MCF 10A (cell line): ENCODE measurements at regions of chr18 and their contacts with region 1.

Region 1: GRCh38 chr18:24726727-24727492 is 266.5 kb downstream of the HRH4 start:
- DNase-seq: peak; percentile 76
- H3K4me3 Mint-ChIP-seq: no peak overlapping the region
- H3K27ac Mint-ChIP-seq: no peak overlapping the region
- H3K4me1 Mint-ChIP-seq: no peaks in the 10 kb centered on the region
- H3K27me3 Mint-ChIP-seq: peaks cover 46% of the 10 kb centered on the region
- CTCF ChIP-seq: peak; percentile 75

Region 2: DNA sequence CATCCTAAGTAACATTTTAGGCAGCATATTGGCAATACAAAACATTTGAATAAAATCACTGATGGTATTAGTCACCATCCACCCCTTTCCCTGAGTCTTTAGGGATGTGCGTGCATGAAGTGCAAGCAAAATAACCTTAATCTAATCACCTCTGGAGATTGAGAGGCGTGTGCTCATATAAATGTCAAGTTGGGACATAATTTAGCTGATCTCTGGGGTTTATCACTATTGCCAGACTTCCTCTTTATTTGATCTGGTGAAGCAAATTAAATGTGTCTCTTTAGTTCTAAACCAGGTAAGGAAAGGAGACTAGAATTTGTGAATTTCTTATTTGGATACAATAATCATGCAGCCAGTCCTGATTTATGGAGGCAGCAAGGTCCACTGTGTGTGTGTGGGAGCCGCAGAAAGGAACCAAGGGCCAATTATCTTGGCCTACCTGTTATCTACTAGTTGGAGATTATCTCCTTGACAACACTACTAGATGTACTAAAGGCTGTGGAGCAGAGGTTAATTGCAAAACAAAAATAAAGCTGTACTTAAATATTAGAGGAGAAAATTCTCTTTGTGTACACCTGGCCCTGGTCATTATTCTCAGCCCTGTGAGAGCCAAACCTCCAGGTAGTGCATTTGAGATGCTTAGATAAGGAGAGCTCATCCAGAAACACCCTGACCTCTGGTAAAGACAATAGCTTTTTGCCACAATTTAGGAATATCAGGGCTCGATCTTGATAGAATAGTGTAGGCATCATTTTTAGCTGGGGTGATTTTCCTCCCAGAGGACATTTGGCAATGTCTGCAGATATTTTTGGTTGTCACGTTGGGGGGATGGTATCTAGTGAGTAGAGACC is 188.3 kb before region 1 on chr18:
- CTCF ChIA-PET with region 1: interaction called, 215 read pairs
- POLR2A ChIA-PET with region 1: no interaction called
- intact Hi-C with region 1: no loop called
- DNase-seq: no peak
- H3K4me3 Mint-ChIP-seq: no peak overlapping the region
- H3K27ac Mint-ChIP-seq: no peak overlapping the region
- H3K4me1 Mint-ChIP-seq: peaks cover 5% of the 10 kb centered on the region
- H3K27me3 Mint-ChIP-seq: peaks cover 33% of the 10 kb centered on the region
- CTCF ChIP-seq: no peak

Region 3: DNA sequence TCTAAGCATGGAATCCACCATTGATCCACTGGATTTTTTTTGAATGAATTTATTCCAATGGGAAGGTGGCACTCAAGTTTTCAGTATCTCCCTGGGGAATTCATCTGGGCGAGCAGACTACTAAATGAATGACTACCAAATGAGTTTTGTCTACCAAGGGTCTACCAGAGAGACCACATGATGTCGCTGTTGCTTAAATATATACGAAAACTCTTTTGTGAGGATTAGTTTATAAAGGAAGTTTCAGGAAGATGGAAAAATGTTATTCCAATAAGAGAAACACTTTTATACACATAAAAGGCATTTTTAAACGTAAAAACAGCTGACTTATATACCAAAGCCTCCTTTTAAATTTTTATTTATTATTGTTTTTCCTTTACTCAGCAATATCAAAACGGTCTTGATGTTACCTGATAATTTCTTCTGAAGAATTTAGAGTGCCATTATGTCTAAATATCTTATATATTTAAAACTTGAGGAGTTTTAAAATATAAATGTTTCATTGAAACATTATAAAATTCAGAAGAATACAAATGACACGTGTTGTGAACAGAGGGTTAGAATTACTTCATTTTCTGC is 126.7 kb before region 1 on chr18:
- CTCF ChIA-PET with region 1: interaction called, 120 read pairs
- POLR2A ChIA-PET with region 1: interaction called, 4 read pairs
- intact Hi-C with region 1: loop called (anchors 1 kb)
- DNase-seq: peak; percentile 65
- H3K4me3 Mint-ChIP-seq: no peak overlapping the region
- H3K27ac Mint-ChIP-seq: no peak overlapping the region
- H3K4me1 Mint-ChIP-seq: no peaks in the 10 kb centered on the region
- H3K27me3 Mint-ChIP-seq: peaks cover 37% of the 10 kb centered on the region
- CTCF ChIP-seq: peak; percentile 58

Region 4: DNA sequence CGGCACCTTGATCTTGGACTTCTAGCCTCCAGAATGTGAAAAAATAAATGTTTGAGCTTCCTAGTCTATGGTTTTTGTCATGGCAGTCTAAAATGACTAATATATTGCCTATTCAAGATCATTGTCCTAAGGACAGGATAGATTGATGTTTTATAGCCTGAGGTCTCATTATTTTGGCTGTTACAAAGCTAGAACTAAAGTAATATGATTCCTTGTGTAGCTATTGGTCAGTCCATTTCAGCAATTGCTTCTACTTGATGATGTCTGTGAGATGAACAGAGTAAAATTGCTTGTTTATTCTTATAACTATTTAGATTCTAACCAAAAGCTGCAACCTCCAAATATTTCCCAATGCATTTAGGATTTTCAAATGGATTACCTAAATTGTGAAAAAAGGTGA is 121.5 kb before region 1 on chr18:
- CTCF ChIA-PET with region 1: interaction called, 120 read pairs
- POLR2A ChIA-PET with region 1: interaction called, 3 read pairs
- intact Hi-C with region 1: loop called (anchors 1 kb)
- DNase-seq: no peak
- H3K4me3 Mint-ChIP-seq: no peak overlapping the region
- H3K27ac Mint-ChIP-seq: no peak overlapping the region
- H3K4me1 Mint-ChIP-seq: no peaks in the 10 kb centered on the region
- H3K27me3 Mint-ChIP-seq: no peaks in the 10 kb centered on the region
- CTCF ChIP-seq: no peak

Region 5: DNA sequence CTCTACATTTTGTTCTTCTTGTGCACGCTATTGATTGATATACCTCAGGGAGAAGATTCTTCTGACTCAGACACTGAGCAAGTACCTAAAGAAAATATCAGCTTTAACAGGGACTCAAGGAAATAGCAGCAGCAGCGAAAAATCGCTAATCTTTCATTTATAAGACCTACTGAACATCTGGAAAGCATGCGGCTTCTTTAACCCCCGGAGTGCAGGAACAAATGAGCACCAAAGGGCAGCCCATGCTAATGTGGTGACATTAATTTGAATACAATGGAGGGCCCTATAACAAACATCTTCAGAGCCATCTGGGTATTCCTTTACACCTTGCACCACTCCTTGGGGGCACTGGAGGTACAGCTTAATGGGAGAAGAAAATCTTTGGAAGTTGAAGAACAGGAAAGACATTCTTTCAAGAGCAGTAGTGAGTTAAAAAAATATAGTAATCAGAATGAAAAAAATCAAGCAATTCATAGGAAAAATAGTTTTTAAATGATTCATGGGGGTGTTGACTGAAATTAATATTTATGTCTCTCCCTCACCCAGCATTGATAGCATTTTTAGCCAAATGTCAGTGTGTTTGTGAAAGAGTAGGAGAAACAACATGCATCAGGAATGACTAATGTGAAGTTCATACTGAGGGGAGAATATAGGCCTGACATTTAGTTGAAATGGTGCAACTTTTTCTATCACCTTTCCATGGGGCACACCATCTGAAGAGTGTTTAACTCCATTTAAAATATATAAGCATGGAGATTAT is 15.2 kb after region 1 on chr18:
- CTCF ChIA-PET with region 1: interaction called, 14 read pairs
- POLR2A ChIA-PET with region 1: no interaction called
- intact Hi-C with region 1: no loop called
- DNase-seq: no peak
- H3K4me3 Mint-ChIP-seq: no peak overlapping the region
- H3K27ac Mint-ChIP-seq: no peak overlapping the region
- H3K4me1 Mint-ChIP-seq: no peaks in the 10 kb centered on the region
- H3K27me3 Mint-ChIP-seq: peaks cover 19% of the 10 kb centered on the region
- CTCF ChIP-seq: no peak